Posterior cingulate gyrus (tissue), 11 donors: ENCODE measurements at regions of chr11 and their contacts with region 1.

Region 1: DNA sequence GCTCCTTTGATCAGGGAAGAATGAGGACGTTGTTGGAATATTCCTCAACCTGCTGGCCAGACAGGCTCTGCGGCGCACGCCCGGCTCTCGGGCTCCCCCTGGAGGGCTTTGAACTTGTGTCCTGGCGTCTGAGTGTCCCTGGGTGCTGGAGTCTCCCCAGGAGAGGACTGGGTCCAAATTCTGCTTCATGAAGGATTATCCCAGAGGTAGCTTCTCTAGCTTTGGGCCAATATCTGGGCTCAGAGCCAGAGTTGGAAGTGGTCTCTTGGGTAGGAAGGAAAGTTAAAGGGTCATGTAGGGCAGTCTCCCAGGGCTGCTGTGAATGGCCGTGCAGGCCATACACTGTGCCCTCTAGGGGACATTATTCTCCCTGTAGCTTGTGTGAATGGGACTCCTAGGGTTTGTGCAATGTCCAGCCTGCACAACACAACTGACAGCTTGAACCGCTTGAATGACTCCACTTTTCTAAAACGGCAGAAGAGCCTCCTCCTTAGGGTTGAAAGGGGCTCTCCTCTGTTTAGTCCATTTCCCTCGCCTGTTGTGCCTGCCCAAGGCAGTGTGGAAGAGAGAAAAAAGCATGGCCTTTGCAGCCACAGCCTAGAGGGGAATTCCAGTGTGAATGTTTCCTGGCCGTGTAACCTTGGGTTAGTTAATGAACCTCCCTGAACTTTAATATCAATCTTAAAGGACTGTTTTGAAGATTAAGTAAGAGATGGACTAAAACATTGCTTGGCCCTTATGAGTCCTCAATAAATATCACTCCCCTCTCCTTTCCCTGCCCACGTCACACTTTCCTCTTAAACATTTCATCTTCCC is 111.2 kb upstream of the THY1 start:
- DNase-seq: peak; percentile 71 to 98 (median 88)

Region 2: DNA sequence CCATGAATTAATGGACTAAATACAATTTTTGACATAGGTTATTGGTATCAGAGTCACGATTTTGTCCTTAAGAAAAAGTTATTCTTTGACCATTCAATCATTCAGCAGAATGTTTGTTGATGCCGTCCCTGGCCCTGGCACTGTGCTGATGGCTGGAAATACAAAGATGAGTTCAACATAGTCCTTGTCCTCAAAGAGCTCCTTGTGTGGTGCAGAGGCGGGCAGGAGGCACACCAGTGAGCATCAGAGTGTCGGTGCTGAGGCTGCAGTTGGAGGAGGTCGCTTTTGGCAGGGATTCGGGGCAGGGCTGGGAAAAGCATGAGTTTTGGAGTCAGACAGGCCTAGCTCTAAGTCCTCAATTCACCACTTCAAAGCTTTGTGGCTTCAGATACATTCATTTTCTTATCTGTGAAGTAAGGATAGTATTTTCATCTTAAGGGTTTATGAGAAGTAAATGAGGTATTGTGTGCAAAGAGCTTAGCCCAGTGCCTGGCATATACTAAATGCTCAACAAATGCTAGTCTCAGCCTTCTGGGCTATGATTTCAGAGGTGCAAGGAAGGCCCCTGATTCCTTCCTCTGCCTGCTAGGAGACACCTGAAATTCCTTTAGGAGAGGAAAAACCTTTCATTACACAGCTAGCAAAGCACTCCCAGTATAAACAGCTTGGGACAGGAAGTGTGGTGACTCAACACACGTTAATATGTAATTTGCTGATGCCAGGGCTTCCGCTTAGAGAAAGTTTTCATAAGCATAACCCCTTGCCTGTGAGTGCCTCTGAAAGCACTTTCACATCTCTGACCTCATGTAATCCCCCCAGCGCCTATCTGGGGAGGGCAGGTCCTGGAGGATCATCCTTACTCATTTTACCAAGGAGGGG is 81.1 kb after region 1 on chr11:
- intact Hi-C with region 1: loop called (anchors 10 kb)
- DNase-seq: peak; percentile 47 to 95 (median 73)